ENCODE measurements at regions of chr4 and their contacts with region 1.

Region 1: GRCh38 chr4:177047070-177047850 is 254.5 kb upstream of the VEGFC start:
- DNase-seq: peak; percentile 63
- ATAC-seq: peak; percentile 85
- H3K4me3 Mint-ChIP-seq: no peak overlapping the region
- H3K27ac Mint-ChIP-seq: no peak overlapping the region
- H3K4me1 Mint-ChIP-seq: no peaks in the 10 kb centered on the region
- H3K27me3 Mint-ChIP-seq: peaks cover 16% of the 10 kb centered on the region

Region 2: DNA sequence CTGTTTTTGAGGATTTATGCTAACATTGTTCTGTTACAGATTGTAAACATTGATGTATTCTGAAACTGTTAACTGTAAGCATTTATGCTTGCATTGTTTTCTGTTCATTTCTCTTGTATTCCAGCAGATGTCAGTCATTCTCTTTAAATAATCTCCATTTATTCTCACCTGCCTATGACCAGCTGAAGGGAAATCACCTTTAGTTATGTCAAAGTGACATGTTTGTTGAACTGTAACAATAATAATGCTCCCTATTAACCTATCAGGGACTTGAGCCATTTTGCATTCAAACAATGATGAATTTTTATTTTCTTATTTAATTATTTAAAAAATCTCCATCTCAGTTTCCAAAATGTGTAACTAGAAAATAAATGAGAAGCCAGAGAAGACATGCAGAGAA is 669.5 kb before region 1 on chr4:
- CTCF ChIA-PET with region 1: interaction called, 18 read pairs
- DNase-seq: no peak
- ATAC-seq: no peak
- H3K4me3 Mint-ChIP-seq: no peak overlapping the region
- H3K27ac Mint-ChIP-seq: no peak overlapping the region
- H3K4me1 Mint-ChIP-seq: no peaks in the 10 kb centered on the region
- H3K27me3 Mint-ChIP-seq: peaks cover 20% of the 10 kb centered on the region

Region 3: GRCh38 chr4:176792671-176793605 is 254.3 kb before region 1 on chr4 and contains the start of gene VEGFC:
- CTCF ChIA-PET with region 1: interaction called, 15 read pairs
- DNase-seq: peak; percentile 40
- ATAC-seq: peak; percentile 80
- H3K4me3 Mint-ChIP-seq: peak within 1 kb of the TSS; percentile 13
- H3K27ac Mint-ChIP-seq: no peak within 1 kb of the TSS
- H3K4me1 Mint-ChIP-seq: peaks cover 3% of the 10 kb centered on the region
- H3K27me3 Mint-ChIP-seq: peaks cover 45% of the 10 kb centered on the region
- total RNA-seq, gene VEGFC: not detected

Measured in activated CD8-positive, alpha-beta memory T cell treated with anti-CD3 and anti-CD28 coated beads, Interleukin-2, amount 10 ng/mL, durations not matched to agents 7 days and 5 days (primary cell).